Activated naive CD4-positive, alpha-beta T cell treated with anti-CD3 and anti-CD28 coated beads for 36 hours (primary cell): ENCODE measurements at regions of chr15 and their contacts with region 1.

Region 1: GRCh38 chr15:63891079-63891767 is 57.5 kb upstream of the HERC1 start:
- DNase-seq: peak; percentile 86
- H3K4me3 Mint-ChIP-seq: no peak overlapping the region
- H3K27ac Mint-ChIP-seq: no peak overlapping the region
- H3K4me1 Mint-ChIP-seq: peaks cover 40% of the 10 kb centered on the region
- H3K27me3 Mint-ChIP-seq: no peaks in the 10 kb centered on the region

Region 2: DNA sequence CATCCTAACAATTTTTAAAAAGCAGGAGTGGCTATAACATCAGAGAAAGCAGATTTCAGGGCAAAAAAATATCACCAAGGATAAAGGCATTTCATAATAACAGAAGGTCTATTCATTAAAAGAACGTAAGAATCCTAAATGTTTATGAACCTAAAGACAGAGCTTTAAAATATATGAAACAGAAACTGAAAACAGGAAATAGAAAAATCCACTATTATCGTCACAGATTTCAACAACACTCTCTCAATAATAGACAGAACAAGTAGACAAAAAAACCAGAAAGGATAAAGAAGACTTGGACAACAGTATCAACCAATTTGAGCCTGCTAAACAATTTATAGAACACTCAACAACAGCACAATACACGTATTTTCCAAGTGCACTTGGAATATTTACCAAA is 222.6 kb before region 1 on chr15:
- CTCF ChIA-PET with region 1: no interaction called
- intact Hi-C with region 1: no loop called
- DNase-seq: no peak
- H3K4me3 Mint-ChIP-seq: peak overlapping the region; percentile 57
- H3K27ac Mint-ChIP-seq: peak overlapping the region; percentile 83
- H3K4me1 Mint-ChIP-seq: peaks cover 57% of the 10 kb centered on the region
- H3K27me3 Mint-ChIP-seq: no peaks in the 10 kb centered on the region

Region 3: DNA sequence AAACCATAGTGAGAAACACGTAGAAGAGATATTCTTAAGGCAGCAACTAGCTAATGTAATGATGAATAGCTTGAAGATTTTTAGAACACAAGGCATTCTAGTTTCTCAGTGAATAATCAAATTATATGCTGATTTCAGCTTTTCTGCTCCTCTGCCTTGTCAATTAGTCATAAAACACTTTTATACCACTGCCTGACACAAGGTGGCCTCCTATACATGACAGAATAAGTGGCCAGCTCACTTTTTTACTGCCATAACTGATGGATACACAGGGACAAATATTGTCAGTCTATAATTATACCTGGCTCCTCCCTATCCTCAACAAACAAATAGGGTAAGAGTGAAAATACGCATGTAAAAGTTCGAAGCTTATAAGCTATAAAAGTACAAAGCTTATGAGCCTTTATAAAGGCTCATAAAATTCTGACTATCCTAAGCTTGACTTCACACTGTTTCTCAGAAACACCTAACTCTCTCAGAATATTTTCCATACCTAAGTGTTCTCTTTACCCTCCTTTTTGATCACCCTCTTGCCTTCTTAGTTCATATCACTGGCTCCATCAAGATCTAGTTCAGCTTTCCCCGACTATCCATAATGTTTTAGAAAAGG is 139.0 kb before region 1 on chr15:
- CTCF ChIA-PET with region 1: interaction called, 46 read pairs
- intact Hi-C with region 1: loop called (anchors 1 kb)
- DNase-seq: peak; percentile 60
- H3K4me3 Mint-ChIP-seq: no peak overlapping the region
- H3K27ac Mint-ChIP-seq: no peak overlapping the region
- H3K4me1 Mint-ChIP-seq: no peaks in the 10 kb centered on the region
- H3K27me3 Mint-ChIP-seq: no peaks in the 10 kb centered on the region

Region 4: DNA sequence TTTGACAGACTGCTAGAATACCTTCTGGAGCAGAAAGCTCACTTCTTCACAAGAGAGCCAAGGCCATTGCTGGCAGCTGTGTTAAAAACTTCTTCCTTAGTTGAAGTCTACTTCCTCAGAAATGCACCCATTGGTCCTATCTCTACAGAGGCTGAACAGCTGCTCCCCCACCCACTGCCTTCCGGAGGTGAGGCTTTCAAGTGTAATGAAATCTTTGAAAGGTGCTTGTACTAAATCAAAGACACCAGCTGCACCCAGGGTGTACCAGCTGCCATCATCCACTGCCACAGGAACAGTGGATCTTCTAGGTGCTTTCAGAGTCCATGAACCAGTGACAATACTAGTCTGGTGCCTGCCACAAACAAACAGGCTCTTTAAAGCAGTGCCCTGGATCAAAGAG is 31.1 kb before region 1 on chr15:
- CTCF ChIA-PET with region 1: interaction called, 5 read pairs
- intact Hi-C with region 1: loop called (anchors 2 kb)
- DNase-seq: peak; percentile 82
- H3K4me3 Mint-ChIP-seq: peak overlapping the region; percentile 32
- H3K27ac Mint-ChIP-seq: peak overlapping the region; percentile 89
- H3K4me1 Mint-ChIP-seq: peaks cover 57% of the 10 kb centered on the region
- H3K27me3 Mint-ChIP-seq: no peaks in the 10 kb centered on the region

Region 5: DNA sequence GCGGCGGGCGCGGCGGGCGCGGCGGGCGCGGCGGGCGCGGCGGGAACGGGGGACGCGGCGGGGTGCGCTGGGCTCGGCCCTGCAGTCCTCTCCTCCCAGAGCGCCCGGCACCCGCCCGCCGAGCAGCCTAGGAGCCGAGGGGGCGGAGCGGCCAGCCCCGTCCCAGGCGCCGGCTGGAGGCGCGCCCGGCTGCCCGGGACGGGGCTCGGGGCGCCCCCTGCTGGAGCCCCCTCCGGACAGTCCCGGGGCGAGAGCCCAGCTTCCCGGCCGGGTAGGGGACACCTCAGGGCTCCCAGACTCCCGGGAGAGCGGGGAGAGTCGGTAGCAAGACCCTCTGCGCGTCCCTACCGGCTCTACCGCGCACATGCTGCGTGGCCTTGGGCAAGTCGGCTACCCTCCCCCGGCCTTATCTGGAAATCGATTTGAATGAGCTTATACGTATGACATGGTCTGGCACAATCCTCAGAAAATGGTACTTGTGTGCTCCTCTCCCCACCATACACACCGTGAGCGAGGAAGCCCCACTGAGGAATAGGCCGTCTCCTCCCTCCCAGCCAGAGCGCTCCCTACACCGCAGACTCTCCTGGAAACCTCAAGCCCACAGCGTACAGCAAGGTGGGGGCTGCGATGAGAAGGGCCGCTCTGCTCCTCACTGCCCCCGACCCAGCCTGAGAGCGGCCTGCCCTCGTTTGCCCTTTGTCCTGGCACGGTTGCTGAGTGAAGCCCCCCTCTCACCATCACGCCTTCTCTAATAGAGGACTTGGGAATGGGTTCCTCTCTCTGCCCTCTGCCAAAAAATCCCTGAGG is 155.3 kb after region 1 on chr15 and contains the start of gene DAPK2:
- CTCF ChIA-PET with region 1: interaction called, 4 read pairs
- intact Hi-C with region 1: loop called (anchors 5 kb)
- DNase-seq: peak; percentile 56
- H3K4me3 Mint-ChIP-seq: peak within 1 kb of the TSS; percentile 53
- H3K27ac Mint-ChIP-seq: no peak within 1 kb of the TSS
- H3K4me1 Mint-ChIP-seq: peaks cover 4% of the 10 kb centered on the region
- H3K27me3 Mint-ChIP-seq: peaks cover 10% of the 10 kb centered on the region
- total RNA-seq, gene DAPK2: 0.44 TPM in 1 of 2 experiments, not detected in the other